Activated CD4-positive, alpha-beta T cell treated with anti-CD3 and anti-CD28 coated beads for 36 hours (primary cell): ENCODE measurements at regions of chr9 and their contacts with region 1.

Region 1: GRCh38 chr9:90914868-90915483 is 113.4 kb downstream of the SYK start:
- DNase-seq: peak; percentile 89
- ATAC-seq: peak; percentile 98
- H3K4me3 Mint-ChIP-seq: no peak overlapping the region
- H3K27ac Mint-ChIP-seq: no peak overlapping the region
- H3K4me1 Mint-ChIP-seq: no peaks in the 10 kb centered on the region
- H3K27me3 Mint-ChIP-seq: no peaks in the 10 kb centered on the region

Region 2: GRCh38 chr9:90523958-90524357 is 391.0 kb before region 1 on chr9:
- CTCF ChIA-PET with region 1: no interaction called
- POLR2A ChIA-PET with region 1: no interaction called
- intact Hi-C with region 1: no loop called
- DNase-seq: no peak
- ATAC-seq: no peak
- H3K4me3 Mint-ChIP-seq: no peak overlapping the region
- H3K27ac Mint-ChIP-seq: no peak overlapping the region
- H3K4me1 Mint-ChIP-seq: no peaks in the 10 kb centered on the region
- H3K27me3 Mint-ChIP-seq: peaks cover 25% of the 10 kb centered on the region

Region 3: GRCh38 chr9:90925581-90926257 is 10.7 kb after region 1 on chr9:
- CTCF ChIA-PET with region 1: interaction called, 15 read pairs
- POLR2A ChIA-PET with region 1: no interaction called
- intact Hi-C with region 1: no loop called
- DNase-seq: no peak
- ATAC-seq: no peak
- H3K4me3 Mint-ChIP-seq: no peak overlapping the region
- H3K27ac Mint-ChIP-seq: no peak overlapping the region
- H3K4me1 Mint-ChIP-seq: no peaks in the 10 kb centered on the region
- H3K27me3 Mint-ChIP-seq: peaks cover 20% of the 10 kb centered on the region

Region 4: GRCh38 chr9:91164724-91165520 is 249.9 kb after region 1 on chr9:
- CTCF ChIA-PET with region 1: no interaction called
- POLR2A ChIA-PET with region 1: no interaction called
- intact Hi-C with region 1: loop called in 1 of 2 experiments (anchors 10 kb)
- DNase-seq: peak; percentile 91
- ATAC-seq: peak; percentile 80
- H3K4me3 Mint-ChIP-seq: peak overlapping the region; percentile 67
- H3K27ac Mint-ChIP-seq: peak overlapping the region; percentile 95
- H3K4me1 Mint-ChIP-seq: peaks cover 47% of the 10 kb centered on the region
- H3K27me3 Mint-ChIP-seq: no peaks in the 10 kb centered on the region

Region 5: GRCh38 chr9:91307279-91307678 is 392.3 kb after region 1 on chr9:
- CTCF ChIA-PET with region 1: no interaction called
- POLR2A ChIA-PET with region 1: no interaction called
- intact Hi-C with region 1: no loop called
- DNase-seq: no peak
- ATAC-seq: no peak
- H3K4me3 Mint-ChIP-seq: no peak overlapping the region
- H3K27ac Mint-ChIP-seq: no peak overlapping the region
- H3K4me1 Mint-ChIP-seq: peaks cover 26% of the 10 kb centered on the region
- H3K27me3 Mint-ChIP-seq: no peaks in the 10 kb centered on the region

Region 6: DNA sequence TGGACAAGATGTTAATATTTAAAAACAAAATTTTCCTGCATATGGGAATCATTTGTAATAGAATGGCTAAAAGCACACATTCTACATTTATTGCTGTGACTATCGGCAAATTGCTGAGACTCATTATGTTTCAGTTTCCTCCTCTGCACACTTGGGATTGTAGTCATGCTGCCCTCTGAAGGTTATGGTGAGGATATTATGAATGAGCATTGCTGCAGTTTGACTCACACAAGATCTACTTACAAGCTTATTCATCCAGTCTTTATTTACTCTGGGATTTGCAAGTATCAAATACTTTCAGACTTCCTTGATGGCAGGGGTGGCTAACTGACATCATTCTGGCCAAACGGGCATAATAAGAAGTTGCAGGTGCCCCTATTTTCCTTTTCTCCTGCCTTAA is 518.2 kb after region 1 on chr9:
- CTCF ChIA-PET with region 1: interaction called, 30 read pairs
- POLR2A ChIA-PET with region 1: no interaction called
- intact Hi-C with region 1: loop called in 1 of 2 experiments (anchors 1 kb)
- DNase-seq: peak; percentile 34
- ATAC-seq: peak; percentile 99
- H3K4me3 Mint-ChIP-seq: no peak overlapping the region
- H3K27ac Mint-ChIP-seq: no peak overlapping the region
- H3K4me1 Mint-ChIP-seq: peaks cover 10% of the 10 kb centered on the region
- H3K27me3 Mint-ChIP-seq: peaks cover 21% of the 10 kb centered on the region

Region 7: GRCh38 chr9:91727316-91727861 is 812.4 kb after region 1 on chr9:
- CTCF ChIA-PET with region 1: interaction called, 11 read pairs
- POLR2A ChIA-PET with region 1: interaction called, 3 read pairs
- intact Hi-C with region 1: loop called (anchors 1 kb)
- DNase-seq: peak; percentile 64
- ATAC-seq: peak; percentile 96
- H3K4me3 Mint-ChIP-seq: no peak overlapping the region
- H3K27ac Mint-ChIP-seq: no peak overlapping the region
- H3K4me1 Mint-ChIP-seq: no peaks in the 10 kb centered on the region
- H3K27me3 Mint-ChIP-seq: peaks cover 3% of the 10 kb centered on the region